ENCODE measurements at regions of chr6 and their contacts with region 1.

Region 1: DNA sequence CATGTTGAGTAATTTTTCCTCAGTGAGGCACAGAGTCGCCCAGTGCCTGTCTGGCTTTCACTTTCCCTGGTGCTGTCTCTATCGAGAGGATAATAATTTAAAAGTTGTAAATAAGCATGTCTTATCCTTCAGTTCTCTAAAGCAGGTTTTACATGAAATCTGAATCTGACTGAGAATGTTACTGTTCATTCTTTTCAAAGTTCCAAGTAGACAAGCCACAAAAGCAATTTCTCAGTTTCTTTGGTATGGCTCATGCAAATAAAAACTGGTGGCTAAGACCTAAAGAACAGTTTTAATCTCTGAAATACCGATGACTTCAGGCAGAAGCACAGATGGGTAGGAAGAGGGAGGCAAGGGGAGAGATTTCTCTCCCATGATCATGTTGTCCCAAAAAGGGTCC is 87.6 kb upstream of the GCM1 start:
- DNase-seq: peak; percentile 48
- H3K4me3 Mint-ChIP-seq: peak overlapping the region; percentile 49
- H3K27ac Mint-ChIP-seq: peak overlapping the region; percentile 53
- H3K4me1 Mint-ChIP-seq: peaks cover 56% of the 10 kb centered on the region
- H3K27me3 Mint-ChIP-seq: no peaks in the 10 kb centered on the region

Region 2: GRCh38 chr6:53189554-53189953 is 46.7 kb before region 1 on chr6:
- CTCF ChIA-PET with region 1: no interaction called
- POLR2A ChIA-PET with region 1: no interaction called
- intact Hi-C with region 1: loop called (anchors 5 kb)
- DNase-seq: no peak
- H3K4me3 Mint-ChIP-seq: no peak overlapping the region
- H3K27ac Mint-ChIP-seq: no peak overlapping the region
- H3K4me1 Mint-ChIP-seq: peaks cover 11% of the 10 kb centered on the region
- H3K27me3 Mint-ChIP-seq: no peaks in the 10 kb centered on the region

Region 3: GRCh38 chr6:53284901-53285300 is 48.7 kb after region 1 on chr6:
- CTCF ChIA-PET with region 1: no interaction called
- POLR2A ChIA-PET with region 1: no interaction called
- intact Hi-C with region 1: loop called (anchors 2 kb)
- DNase-seq: peak; percentile 57
- H3K4me3 Mint-ChIP-seq: peak overlapping the region; percentile 30
- H3K27ac Mint-ChIP-seq: peak overlapping the region; percentile 68
- H3K4me1 Mint-ChIP-seq: peaks cover 69% of the 10 kb centered on the region
- H3K27me3 Mint-ChIP-seq: no peaks in the 10 kb centered on the region

Measured in activated CD4-positive, alpha-beta memory T cell treated with anti-CD3 and anti-CD28 coated beads for 36 hours (primary cell).